Activated CD8-positive, alpha-beta memory T cell treated with anti-CD3 and anti-CD28 coated beads, Interleukin-2, amount 10 ng/mL, durations not matched to agents 7 days and 5 days (primary cell): ENCODE measurements at regions of chr6 and their contacts with region 1.

Region 1: DNA sequence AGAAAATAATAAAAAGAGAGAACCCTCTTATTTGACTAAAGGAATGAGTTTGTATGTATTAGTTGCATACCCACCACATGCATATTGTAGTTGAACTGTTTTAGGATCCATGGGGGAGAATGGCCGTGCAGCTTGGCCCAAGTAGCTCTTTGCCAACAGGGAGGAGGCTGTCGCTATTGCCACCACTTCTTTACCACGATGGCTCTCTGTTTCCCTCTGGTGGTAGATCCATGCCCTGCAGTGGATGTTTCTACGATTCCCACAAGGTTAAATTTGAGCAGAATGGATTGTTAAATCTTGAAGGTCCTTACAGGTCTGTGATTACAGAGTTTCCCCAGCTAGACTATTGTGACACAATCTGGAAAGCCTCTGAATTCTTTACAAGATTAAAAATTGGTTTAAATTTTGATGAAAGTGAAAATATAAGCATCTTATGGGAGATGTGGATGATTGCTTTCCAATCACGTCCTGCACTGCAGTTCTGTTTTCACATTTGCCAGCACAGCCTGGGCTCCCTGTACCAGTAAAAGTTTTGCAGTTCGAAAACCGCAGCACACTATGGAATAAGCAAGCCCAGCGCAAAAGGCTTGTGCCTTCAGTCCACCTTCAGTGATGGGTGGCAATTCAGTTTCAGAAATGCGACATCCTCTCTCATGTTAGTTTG is 34.4 kb upstream of the FNDC1 start:
- DNase-seq: peak; percentile 84
- ATAC-seq: peak; percentile 86
- H3K4me3 Mint-ChIP-seq: no peak overlapping the region
- H3K27ac Mint-ChIP-seq: no peak overlapping the region
- H3K4me1 Mint-ChIP-seq: peaks cover 7% of the 10 kb centered on the region
- H3K27me3 Mint-ChIP-seq: peaks cover 37% of the 10 kb centered on the region

Region 2: GRCh38 chr6:158978757-158979156 is 156.1 kb before region 1 on chr6:
- CTCF ChIA-PET with region 1: interaction called, 16 read pairs
- DNase-seq: no peak
- ATAC-seq: no peak
- H3K4me3 Mint-ChIP-seq: no peak overlapping the region
- H3K27ac Mint-ChIP-seq: no peak overlapping the region
- H3K4me1 Mint-ChIP-seq: no peaks in the 10 kb centered on the region
- H3K27me3 Mint-ChIP-seq: no peaks in the 10 kb centered on the region

Region 3: GRCh38 chr6:159008656-159009288 is 126.1 kb before region 1 on chr6:
- CTCF ChIA-PET with region 1: interaction called, 165 read pairs
- DNase-seq: no peak
- ATAC-seq: peak; percentile 84
- H3K4me3 Mint-ChIP-seq: peak overlapping the region; percentile 62
- H3K27ac Mint-ChIP-seq: peak overlapping the region; percentile 82
- H3K4me1 Mint-ChIP-seq: peaks cover 36% of the 10 kb centered on the region
- H3K27me3 Mint-ChIP-seq: no peaks in the 10 kb centered on the region

Region 4: GRCh38 chr6:159042003-159042825 is 92.6 kb before region 1 on chr6:
- CTCF ChIA-PET with region 1: interaction called, 24 read pairs
- DNase-seq: peak; percentile 90
- ATAC-seq: peak; percentile 52
- H3K4me3 Mint-ChIP-seq: peak overlapping the region; percentile 95
- H3K27ac Mint-ChIP-seq: peak overlapping the region; percentile 97
- H3K4me1 Mint-ChIP-seq: peaks cover 63% of the 10 kb centered on the region
- H3K27me3 Mint-ChIP-seq: no peaks in the 10 kb centered on the region

Region 5: DNA sequence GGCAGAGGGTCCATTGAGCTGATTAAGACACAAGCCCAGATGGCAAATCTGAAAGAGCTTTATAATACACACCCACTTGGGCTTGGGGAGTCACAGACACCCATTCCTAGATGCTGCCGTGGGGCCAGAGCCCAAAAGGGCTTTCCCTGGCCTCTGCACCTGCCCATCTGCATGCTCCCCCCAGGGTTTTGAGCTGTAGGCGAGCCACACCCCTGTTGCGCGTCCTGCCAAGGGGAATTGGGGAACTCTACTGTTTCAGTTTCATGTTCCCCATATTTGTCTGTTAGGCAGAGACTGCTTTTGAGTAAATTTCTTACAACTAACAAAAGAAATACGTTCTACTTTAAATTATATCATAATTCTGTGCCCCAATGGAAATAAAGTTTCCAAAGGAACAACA is 18.5 kb before region 1 on chr6:
- CTCF ChIA-PET with region 1: interaction called, 53 read pairs
- DNase-seq: no peak
- ATAC-seq: no peak
- H3K4me3 Mint-ChIP-seq: no peak overlapping the region
- H3K27ac Mint-ChIP-seq: no peak overlapping the region
- H3K4me1 Mint-ChIP-seq: peaks cover 7% of the 10 kb centered on the region
- H3K27me3 Mint-ChIP-seq: peaks cover 3% of the 10 kb centered on the region